Common myeloid progenitor, CD34-positive (primary cell): ENCODE measurements at regions of chr11 and their contacts with region 1.

Region 1: GRCh38 chr11:119533921-119534736 is 111.2 kb upstream of the THY1 start:
- DNase-seq: peak; percentile 47 to 67 (median 60)
- H3K4me3 ChIP-seq: no peak overlapping the region
- H3K27ac ChIP-seq: no peak overlapping the region
- H3K4me1 ChIP-seq: no peaks in the 10 kb centered on the region
- H3K27me3 ChIP-seq: peaks cover 0 to 5% (median 0%) of the 10 kb centered on the region in 5 experiments

Region 2: DNA sequence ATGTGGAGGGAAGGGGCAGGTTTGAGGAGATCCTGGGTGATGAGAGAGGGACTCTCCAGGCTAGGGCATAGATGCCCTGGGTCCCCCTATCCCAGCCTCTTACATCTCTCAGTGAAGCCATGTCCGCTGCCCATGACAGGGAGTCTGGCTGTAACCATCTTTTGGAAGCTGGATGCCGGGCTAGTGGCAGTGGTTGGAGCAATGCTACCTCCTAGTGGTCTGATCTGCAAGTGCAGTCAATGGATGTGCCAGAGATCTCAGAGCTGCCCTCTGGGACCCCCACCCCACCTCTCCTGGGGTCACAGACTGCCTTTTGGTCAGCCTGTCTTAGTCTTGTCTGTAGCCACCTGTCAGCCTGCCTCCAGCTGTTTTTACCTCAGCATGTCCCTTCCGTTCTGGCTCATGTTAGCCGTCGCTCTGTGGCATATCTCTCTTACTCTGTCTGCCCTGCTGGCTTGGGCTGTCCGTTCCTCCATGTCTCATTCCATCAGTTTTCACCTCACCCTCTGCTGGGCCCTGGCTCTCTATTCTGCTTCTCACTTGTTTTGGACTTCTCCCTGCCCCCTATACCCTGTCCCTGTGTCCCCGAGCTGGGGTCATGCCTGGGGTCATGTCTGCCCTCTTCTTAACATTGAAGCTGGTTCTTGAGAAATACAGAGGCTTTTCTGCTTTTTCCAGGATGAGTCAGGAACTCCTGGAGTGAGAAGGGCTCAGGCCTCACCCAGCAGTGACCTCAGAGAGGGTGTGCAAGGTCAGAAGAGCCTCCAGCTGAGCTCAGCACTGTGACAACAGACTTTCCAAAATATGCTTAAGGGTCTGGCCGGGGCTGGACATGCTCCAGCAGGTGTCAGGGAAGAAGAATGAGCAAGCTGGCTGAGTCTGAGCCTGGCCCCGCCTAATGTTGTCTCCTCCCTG is 59.2 kb before region 1 on chr11:
- CTCF ChIA-PET with region 1: interaction called, 14 read pairs
- POLR2A ChIA-PET with region 1: no interaction called
- DNase-seq: peak; percentile 52 to 82 (median 70)
- H3K4me3 ChIP-seq: no peak overlapping the region
- H3K27ac ChIP-seq: no peak overlapping the region
- H3K4me1 ChIP-seq: no peaks in the 10 kb centered on the region
- H3K27me3 ChIP-seq: peaks cover 0 to 6% (median 2%) of the 10 kb centered on the region in 5 experiments

Region 3: GRCh38 chr11:119481021-119481666 is 53.0 kb before region 1 on chr11:
- CTCF ChIA-PET with region 1: interaction called, 14 read pairs
- POLR2A ChIA-PET with region 1: no interaction called
- DNase-seq: peak; percentile 62 to 71 (median 66)
- H3K4me3 ChIP-seq: no peak overlapping the region
- H3K27ac ChIP-seq: no peak overlapping the region
- H3K4me1 ChIP-seq: no peaks in the 10 kb centered on the region
- H3K27me3 ChIP-seq: peaks cover 0 to 6% (median 4%) of the 10 kb centered on the region in 5 experiments

Region 4: GRCh38 chr11:119509969-119510401 is 24.1 kb before region 1 on chr11:
- CTCF ChIA-PET with region 1: interaction called, 20 read pairs
- POLR2A ChIA-PET with region 1: no interaction called
- DNase-seq: peak; percentile 7 to 60 (median 59)
- H3K4me3 ChIP-seq: no peak overlapping the region
- H3K27ac ChIP-seq: no peak overlapping the region
- H3K4me1 ChIP-seq: no peaks in the 10 kb centered on the region
- H3K27me3 ChIP-seq: peaks cover 0 to 8% (median 0%) of the 10 kb centered on the region in 5 experiments

Region 5: DNA sequence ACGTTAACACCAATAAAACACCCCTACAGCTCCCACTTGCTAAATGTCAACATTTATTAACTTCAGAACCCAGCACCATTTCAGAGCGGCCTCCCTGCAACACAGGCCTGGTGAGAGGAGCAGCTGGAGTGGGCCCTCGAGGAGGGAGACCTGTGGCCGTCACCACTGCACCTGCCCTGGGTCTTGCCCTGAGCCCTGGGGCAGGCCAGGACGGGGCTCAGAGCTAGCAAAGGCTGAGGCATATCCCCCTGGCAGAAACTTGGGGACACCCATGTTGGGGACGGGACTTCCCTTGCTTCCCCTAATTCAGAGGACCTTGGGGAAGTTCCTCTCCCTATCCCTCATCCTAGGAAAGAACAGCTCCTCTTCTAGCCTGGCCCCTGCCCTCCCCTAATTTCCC is 26.2 kb after region 1 on chr11:
- CTCF ChIA-PET with region 1: no interaction called
- POLR2A ChIA-PET with region 1: no interaction called
- DNase-seq: no peak
- H3K4me3 ChIP-seq: no peak overlapping the region
- H3K27ac ChIP-seq: no peak overlapping the region
- H3K4me1 ChIP-seq: no peaks in the 10 kb centered on the region
- H3K27me3 ChIP-seq: peaks cover 0 to 1% (median 0%) of the 10 kb centered on the region in 5 experiments